Left cardiac atrium (tissue), 4 donors: ENCODE measurements at regions of chr17 and their contacts with region 1.

Region 1: GRCh38 chr17:4110152-4110551 is 32.7 kb downstream of the ZZEF1 start:
- DNase-seq: no peak
- ATAC-seq: no peak

Region 2: GRCh38 chr17:4054446-4054845 is 55.7 kb before region 1 on chr17:
- intact Hi-C with region 1: loop called in 1 of 2 experiments (anchors 10 kb)
- DNase-seq: no peak
- ATAC-seq: no peak

Region 3: GRCh38 chr17:4066210-4066609 is 43.9 kb before region 1 on chr17:
- intact Hi-C with region 1: no loop called
- DNase-seq: no peak
- ATAC-seq: no peak